Gastrocnemius medialis (tissue), 4 donors: ENCODE measurements at regions of chr9 and their contacts with region 1.

Region 1: DNA sequence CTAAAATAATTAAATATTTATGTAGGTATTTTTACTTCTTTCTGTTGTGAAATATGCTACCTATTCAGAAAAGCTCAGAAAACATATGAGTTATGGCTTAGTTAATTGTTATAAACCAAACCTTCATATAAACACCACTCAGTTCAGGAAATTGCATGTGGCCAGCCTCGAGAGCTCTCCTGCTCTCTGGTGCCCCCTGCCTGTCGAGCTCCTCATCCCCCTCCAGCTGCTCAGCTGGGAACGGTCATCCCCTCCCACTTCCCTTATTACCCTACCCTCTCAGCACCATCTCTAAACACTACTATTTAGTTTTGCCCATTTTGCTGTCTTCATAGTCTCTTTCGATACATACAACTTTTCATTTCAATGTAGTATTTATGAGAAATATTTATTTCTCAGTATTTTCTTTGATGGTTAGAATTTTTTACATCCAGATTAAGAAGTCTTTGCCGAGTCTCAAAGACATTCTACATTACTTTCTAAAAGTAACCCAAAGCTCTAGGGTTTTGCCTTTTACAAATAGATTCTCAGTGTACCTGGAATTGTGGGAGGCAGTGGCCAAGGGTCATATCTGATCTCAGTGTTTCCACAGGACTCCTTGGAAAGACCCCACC is 51.2 kb upstream of the SEMA4D start:
- DNase-seq: peak; percentile 49 to 72
- ATAC-seq: peak; percentile 92 to 98
- H3K4me3 ChIP-seq: no peak overlapping the region
- H3K27ac ChIP-seq: no peak overlapping the region
- H3K4me1 ChIP-seq: no peaks in the 10 kb centered on the region
- H3K27me3 ChIP-seq: no peaks in the 10 kb centered on the region
- CTCF ChIP-seq: peak; percentile 75 to 94 (median 86)
- POLR2A ChIP-seq: no peak

Region 2: GRCh38 chr9:89318123-89319014 is 230.8 kb before region 1 on chr9 and contains the start of gene SECISBP2:
- in situ Hi-C with region 1: loop called in 1 of 4 experiments (anchors 5 kb)
- intact Hi-C with region 1: loop called (anchors 1 kb)
- DNase-seq: peak; percentile 92 to 95
- ATAC-seq: peak; percentile 90 to 93
- H3K4me3 ChIP-seq: peak within 1 kb of the TSS; percentile 69 to 83 (median 80)
- H3K27ac ChIP-seq: peak within 1 kb of the TSS; percentile 87 to 99 (median 98)
- H3K4me1 ChIP-seq: peaks cover 39 to 40% of the 10 kb centered on the region in 2 donors
- H3K27me3 ChIP-seq: no peaks in the 10 kb centered on the region
- CTCF ChIP-seq: peak; percentile 62 to 73 (median 66)
- POLR2A ChIP-seq: peak; percentile 96 to 97
- total RNA-seq, gene SECISBP2: 40.2 to 70.8 (median 54.9) TPM

Region 3: GRCh38 chr9:89388084-89388867 is 160.9 kb before region 1 on chr9:
- in situ Hi-C with region 1: no loop called
- intact Hi-C with region 1: loop called (anchors 2 kb)
- DNase-seq: peak; percentile 85 to 94
- ATAC-seq: peak; percentile 83 to 87
- H3K4me3 ChIP-seq: no peak overlapping the region
- H3K27ac ChIP-seq: peak overlapping the region; percentile 79 to 93 (median 88)
- H3K4me1 ChIP-seq: peaks cover 20 to 26% of the 10 kb centered on the region in 2 donors
- H3K27me3 ChIP-seq: no peaks in the 10 kb centered on the region
- CTCF ChIP-seq: peak in 2 of 5 experiments; percentile 10 to 38
- POLR2A ChIP-seq: peak in 1 of 2 donors; percentile 19

Region 4: DNA sequence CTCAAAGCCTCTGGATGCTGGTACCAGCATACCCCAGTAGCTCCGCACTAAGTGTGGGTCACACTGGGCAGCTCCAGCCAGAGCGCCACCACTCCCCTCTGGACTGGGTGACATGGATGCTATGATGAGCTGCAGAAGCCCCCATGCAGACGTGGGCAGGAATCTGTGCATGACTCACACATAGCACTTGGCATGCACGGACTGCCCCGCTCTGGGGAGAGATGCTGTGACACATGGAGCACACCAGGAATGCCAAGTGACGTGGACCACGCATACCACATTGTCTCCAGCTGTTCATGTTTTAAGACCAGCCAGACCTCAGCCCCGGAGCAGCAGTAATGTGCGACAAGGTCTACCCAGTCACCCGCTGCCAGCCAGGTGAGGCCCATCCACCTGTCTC is 115.3 kb before region 1 on chr9:
- in situ Hi-C with region 1: no loop called
- intact Hi-C with region 1: loop called (anchors 5 kb)
- DNase-seq: no peak
- ATAC-seq: peak in 1 of 2 donors; percentile 16
- H3K4me3 ChIP-seq: no peak overlapping the region
- H3K27ac ChIP-seq: no peak overlapping the region
- H3K4me1 ChIP-seq: peaks cover 15 to 28% of the 10 kb centered on the region in 2 donors
- H3K27me3 ChIP-seq: no peaks in the 10 kb centered on the region
- CTCF ChIP-seq: no peak
- POLR2A ChIP-seq: no peak

Region 5: DNA sequence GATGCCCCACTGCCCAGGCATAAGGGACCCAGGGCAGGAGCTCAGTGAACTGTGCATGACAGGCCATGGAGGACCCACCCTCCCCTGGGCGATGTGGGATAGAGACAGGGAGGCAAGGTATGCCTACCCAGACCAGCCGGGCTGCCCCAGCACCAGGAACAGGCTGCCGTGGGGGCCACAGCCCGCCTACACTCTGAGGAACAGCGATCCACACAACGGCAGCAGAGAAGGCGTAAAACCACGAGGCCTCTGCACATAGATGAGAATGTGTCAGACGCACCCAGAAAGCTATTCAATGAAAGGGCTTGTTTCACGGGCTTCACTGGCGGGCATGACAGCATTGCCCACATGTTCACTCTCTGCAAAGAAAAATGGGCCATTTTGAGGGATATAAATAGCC is 100.8 kb before region 1 on chr9:
- in situ Hi-C with region 1: no loop called
- intact Hi-C with region 1: no loop called
- DNase-seq: no peak
- ATAC-seq: no peak
- H3K4me3 ChIP-seq: no peak overlapping the region
- H3K27ac ChIP-seq: no peak overlapping the region
- H3K4me1 ChIP-seq: peaks cover 16 to 21% of the 10 kb centered on the region in 2 donors
- H3K27me3 ChIP-seq: no peaks in the 10 kb centered on the region
- CTCF ChIP-seq: no peak
- POLR2A ChIP-seq: no peak

Region 6: GRCh38 chr9:89513837-89514236 is 35.3 kb before region 1 on chr9:
- in situ Hi-C with region 1: no loop called
- intact Hi-C with region 1: loop called (anchors 5 kb)
- DNase-seq: no peak
- ATAC-seq: no peak
- H3K4me3 ChIP-seq: no peak overlapping the region
- H3K27ac ChIP-seq: no peak overlapping the region
- H3K4me1 ChIP-seq: no peaks in the 10 kb centered on the region
- H3K27me3 ChIP-seq: no peaks in the 10 kb centered on the region
- CTCF ChIP-seq: no peak
- POLR2A ChIP-seq: no peak